ENCODE measurements at regions of chr5 and their contacts with region 1.

Region 1: GRCh38 chr5:172910828-172911627 is 48.2 kb upstream of the RPL26L1 start:
- DNase-seq: peak; percentile 100

Region 2: GRCh38 chr5:172777881-172778814 is 132.9 kb before region 1 on chr5:
- in situ Hi-C with region 1: loop called (anchors 25 kb)
- DNase-seq: peak; percentile 82

Measured in Caki2 (cell line).